Activated CD4-positive, alpha-beta memory T cell treated with anti-CD3 and anti-CD28 coated beads, Interleukin-2, amount 10 ng/mL, durations not matched to agents 7 days and 5 days (primary cell): ENCODE measurements at regions of chr1 and their contacts with region 1.

Region 1: GRCh38 chr1:113928941-113929749 is at the start of gene HIPK1:
- DNase-seq: peak; percentile 94
- H3K4me3 Mint-ChIP-seq: peak within 1 kb of the TSS; percentile 94
- H3K27ac Mint-ChIP-seq: peak within 1 kb of the TSS; percentile 95
- H3K4me1 Mint-ChIP-seq: peaks cover 48% of the 10 kb centered on the region
- H3K27me3 Mint-ChIP-seq: peaks cover 4% of the 10 kb centered on the region
- total RNA-seq, gene HIPK1: 89.5 to 92.5 TPM

Region 2: DNA sequence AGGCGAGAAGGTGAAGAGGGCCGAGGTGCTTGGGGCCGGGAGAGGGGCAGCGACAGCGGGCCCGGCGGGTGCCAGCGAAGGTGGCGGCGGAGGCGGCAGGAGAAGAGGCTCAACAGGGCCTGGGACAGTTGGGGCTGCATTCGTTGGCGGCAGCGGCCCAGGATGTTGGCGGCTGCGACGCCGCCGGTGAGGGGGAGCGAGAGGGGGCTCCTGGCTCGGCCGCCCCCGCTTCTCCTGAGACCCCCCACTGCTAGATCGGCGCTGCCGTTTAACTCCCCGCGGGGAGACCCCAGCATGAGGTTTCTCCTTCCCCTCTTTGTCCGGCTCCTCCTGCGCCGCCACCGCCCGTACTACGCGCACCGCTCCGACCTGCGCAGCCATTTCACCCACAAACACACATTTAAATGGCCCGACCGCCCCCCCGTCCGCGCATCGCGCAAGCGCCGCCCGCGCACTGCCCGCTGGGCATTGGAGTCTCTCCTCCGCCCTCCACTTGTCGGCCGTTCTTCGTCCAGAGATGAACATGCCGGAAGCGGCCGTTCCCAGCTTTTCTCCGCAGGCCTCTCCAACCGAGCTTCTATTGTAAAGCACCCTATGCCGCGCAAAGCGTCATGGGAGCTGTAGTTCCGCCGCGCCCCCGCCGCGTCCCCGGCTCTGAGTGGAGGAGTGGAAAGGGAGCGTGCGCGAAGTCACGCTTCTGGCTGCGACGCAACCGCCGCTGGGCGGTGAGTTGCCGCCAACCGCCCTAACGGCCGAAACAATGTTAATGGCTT is 117.1 kb before region 1 on chr1 and contains the start of gene RSBN1:
- CTCF ChIA-PET with region 1: interaction called, 6 read pairs
- POLR2A ChIA-PET with region 1: interaction called, 37 read pairs
- DNase-seq: peak; percentile 99
- H3K4me3 Mint-ChIP-seq: peak within 1 kb of the TSS; percentile 98
- H3K27ac Mint-ChIP-seq: peak within 1 kb of the TSS; percentile 92
- H3K4me1 Mint-ChIP-seq: peaks cover 36% of the 10 kb centered on the region
- H3K27me3 Mint-ChIP-seq: no peaks in the 10 kb centered on the region
- total RNA-seq, gene RSBN1: 27.9 to 32.1 TPM

Region 3: DNA sequence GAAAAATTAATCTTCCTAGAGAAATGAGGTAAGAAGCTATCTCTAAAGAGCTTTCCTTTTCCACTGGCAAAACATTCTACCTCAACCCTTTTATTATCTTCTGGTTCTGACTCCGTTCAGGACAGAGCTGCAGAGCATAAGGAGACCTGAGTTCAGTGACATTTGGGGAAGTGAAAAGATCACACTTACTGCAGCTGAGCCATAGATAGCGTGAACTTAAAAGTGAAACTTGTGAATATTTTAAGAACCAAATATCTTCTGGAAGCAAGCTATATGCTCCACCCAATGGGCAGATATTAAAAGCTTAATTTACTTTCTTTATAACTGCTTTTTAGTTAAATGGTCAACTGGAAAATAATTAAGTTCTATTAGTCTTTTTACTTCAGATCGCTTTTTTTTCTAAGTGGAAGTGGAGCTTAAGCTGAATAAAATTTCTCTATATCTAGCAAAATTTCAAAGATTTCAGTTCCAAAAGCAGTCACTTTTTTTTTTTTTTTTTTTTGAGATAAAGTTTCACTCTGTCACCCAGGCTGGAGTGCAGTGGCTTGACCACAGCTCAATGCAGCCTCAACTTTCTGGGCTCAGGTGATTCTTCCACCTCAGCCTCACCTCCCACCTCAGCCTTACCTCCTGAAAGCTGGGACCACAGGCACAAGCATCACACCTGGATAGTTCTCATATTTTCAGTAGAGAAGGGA is 69.5 kb before region 1 on chr1:
- CTCF ChIA-PET with region 1: no interaction called
- POLR2A ChIA-PET with region 1: interaction called, 20 read pairs
- DNase-seq: no peak
- H3K4me3 Mint-ChIP-seq: no peak overlapping the region
- H3K27ac Mint-ChIP-seq: peak overlapping the region; percentile 64
- H3K4me1 Mint-ChIP-seq: peaks cover 50% of the 10 kb centered on the region
- H3K27me3 Mint-ChIP-seq: no peaks in the 10 kb centered on the region

Region 4: DNA sequence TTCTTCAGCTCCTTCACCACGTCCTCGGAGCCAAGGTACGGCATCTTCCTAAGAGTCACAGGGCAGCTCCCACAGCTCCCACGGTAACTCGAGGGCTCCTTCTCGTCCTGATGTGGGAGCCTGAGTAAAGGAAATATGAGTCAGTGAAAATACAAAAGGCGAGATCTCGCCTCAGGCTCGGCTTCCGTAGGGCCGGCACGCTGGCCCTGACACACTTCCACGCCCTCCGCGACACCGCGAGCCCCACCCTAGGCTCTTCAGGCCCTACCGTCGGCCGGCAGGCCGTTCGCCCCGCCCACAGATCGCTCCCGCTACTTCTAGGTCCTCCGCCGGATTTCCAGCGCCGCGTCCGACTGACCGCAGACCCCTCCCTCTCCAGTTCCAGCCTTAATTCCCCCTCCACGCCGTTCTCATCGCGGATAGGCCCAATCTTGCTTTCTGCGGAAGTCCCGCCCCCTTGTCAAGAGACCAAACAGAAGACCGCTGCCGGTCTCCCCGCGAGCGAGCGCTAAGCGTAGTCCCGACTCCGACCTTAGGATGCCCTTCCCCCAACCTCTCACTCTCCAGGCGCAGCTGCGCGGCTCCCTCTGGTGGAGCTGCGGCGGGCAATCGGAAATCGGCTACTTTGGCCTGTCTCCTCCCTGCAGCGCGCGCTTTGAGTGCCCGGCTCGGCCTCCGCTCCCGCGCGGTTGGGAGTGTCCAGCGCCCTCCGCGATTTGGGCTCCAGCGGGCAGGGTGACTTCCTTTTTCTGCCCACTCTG is 24.3 kb before region 1 on chr1 and contains the starts of genes AP4B1 and DCLRE1B:
- CTCF ChIA-PET with region 1: interaction called, 90 read pairs
- POLR2A ChIA-PET with region 1: interaction called, 268 read pairs
- DNase-seq: peak; percentile 99
- H3K4me3 Mint-ChIP-seq: peak within 1 kb of the TSS; percentile 93
- H3K27ac Mint-ChIP-seq: peak within 1 kb of the TSS; percentile 89
- H3K4me1 Mint-ChIP-seq: peaks cover 62% of the 10 kb centered on the region
- H3K27me3 Mint-ChIP-seq: no peaks in the 10 kb centered on the region
- total RNA-seq, gene AP4B1: 53.7 to 56.7 TPM
- total RNA-seq, gene DCLRE1B: 13.2 to 14.4 TPM

Region 5: GRCh38 chr1:113940365-113941244 is 11.5 kb after region 1 on chr1:
- CTCF ChIA-PET with region 1: interaction called, 19 read pairs
- POLR2A ChIA-PET with region 1: interaction called, 62 read pairs
- DNase-seq: peak; percentile 54
- H3K4me3 Mint-ChIP-seq: peak overlapping the region; percentile 39
- H3K27ac Mint-ChIP-seq: peak overlapping the region; percentile 79
- H3K4me1 Mint-ChIP-seq: peaks cover 67% of the 10 kb centered on the region
- H3K27me3 Mint-ChIP-seq: no peaks in the 10 kb centered on the region

Region 6: DNA sequence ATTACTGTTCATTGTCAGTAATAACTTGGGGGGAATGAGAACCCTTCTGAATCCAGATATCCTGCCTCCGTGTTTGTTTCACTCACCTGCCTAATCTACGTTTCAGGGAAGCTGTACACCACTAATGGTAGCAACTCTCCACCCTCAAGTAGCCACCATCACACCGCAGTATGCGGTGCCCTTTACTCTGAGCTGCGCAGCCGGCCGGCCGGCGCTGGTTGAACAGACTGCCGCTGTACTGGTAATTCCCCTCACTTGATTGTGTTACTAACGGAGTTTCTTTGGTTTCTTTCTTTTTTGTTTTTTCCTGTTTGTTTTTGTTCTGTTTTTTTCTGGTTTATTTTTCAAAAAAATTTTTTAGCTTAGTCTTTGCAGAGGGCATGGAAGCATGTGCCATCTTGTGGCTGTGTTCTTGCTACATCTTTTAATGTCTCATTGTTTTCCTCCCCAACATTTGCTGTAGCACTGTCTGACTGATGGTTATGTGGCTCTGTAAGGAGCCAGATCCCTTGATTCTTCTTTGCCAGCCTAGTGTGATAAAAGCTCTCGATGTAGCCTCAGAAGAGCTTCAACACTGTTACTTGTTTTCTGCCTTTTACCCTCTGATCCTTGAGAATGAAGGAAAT is 34.2 kb after region 1 on chr1:
- CTCF ChIA-PET with region 1: interaction called, 11 read pairs
- POLR2A ChIA-PET with region 1: interaction called, 8 read pairs
- DNase-seq: no peak
- H3K4me3 Mint-ChIP-seq: no peak overlapping the region
- H3K27ac Mint-ChIP-seq: no peak overlapping the region
- H3K4me1 Mint-ChIP-seq: peaks cover 5% of the 10 kb centered on the region
- H3K27me3 Mint-ChIP-seq: no peaks in the 10 kb centered on the region

Region 7: GRCh38 chr1:114511032-114511785 is 582.1 kb after region 1 on chr1 and contains the start of gene TRIM33:
- CTCF ChIA-PET with region 1: interaction called, 4 read pairs
- POLR2A ChIA-PET with region 1: interaction called, 10 read pairs
- DNase-seq: peak; percentile 92
- H3K4me3 Mint-ChIP-seq: peak within 1 kb of the TSS; percentile 93
- H3K27ac Mint-ChIP-seq: peak within 1 kb of the TSS; percentile 98
- H3K4me1 Mint-ChIP-seq: peaks cover 47% of the 10 kb centered on the region
- H3K27me3 Mint-ChIP-seq: no peaks in the 10 kb centered on the region
- total RNA-seq, gene TRIM33: 36.0 to 36.5 TPM